Activated T-helper 2 cell treated with anti-CD3 and anti-CD28 coated beads, Interferon-gamma antibody, Interleukin-2, Interleukin-4, amounts not matched to agents 10 μg/mL and 5 μg/mL and 100 μg/mL, durations not matched to agents 14 hours and 24 hours and 36 hours (primary cell): ENCODE measurements at regions of chr13 and their contacts with region 1.

Region 1: GRCh38 chr13:44879463-44880058 is 109.7 kb downstream of the NUFIP1 start:
- DNase-seq: no peak
- H3K4me3 Mint-ChIP-seq: no peak overlapping the region
- H3K27ac Mint-ChIP-seq: no peak overlapping the region
- H3K4me1 Mint-ChIP-seq: peaks cover 2% of the 10 kb centered on the region
- H3K27me3 Mint-ChIP-seq: peaks cover 4% of the 10 kb centered on the region

Region 2: DNA sequence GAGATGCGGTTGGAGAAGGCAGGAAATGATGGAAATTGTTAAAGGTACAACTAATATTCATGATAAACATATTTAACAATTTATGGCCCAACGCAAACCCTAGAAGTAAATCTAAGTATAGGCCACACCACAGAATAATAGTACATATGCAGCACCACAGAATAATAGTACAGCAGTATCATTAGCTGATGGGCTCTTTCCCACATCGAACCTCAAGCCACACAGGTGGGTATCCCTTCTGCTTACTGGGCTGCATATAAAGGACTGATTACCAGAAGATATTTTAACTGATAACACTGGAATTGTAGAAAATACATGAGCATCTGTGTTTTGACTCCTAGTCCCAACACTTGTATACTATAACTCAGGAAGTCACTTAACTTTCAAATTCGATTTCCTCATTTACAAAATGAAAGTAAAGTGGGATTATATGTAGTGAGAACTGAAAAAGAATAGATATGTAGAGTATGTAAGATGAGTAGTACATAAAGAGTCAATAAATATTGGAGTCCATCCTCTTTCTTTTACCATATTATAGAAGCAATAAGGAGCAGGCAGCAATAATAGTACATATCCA is 394.9 kb before region 1 on chr13:
- intact Hi-C with region 1: loop called (anchors 1 kb)
- DNase-seq: no peak
- H3K4me3 Mint-ChIP-seq: no peak overlapping the region
- H3K27ac Mint-ChIP-seq: no peak overlapping the region
- H3K4me1 Mint-ChIP-seq: peaks cover 11% of the 10 kb centered on the region
- H3K27me3 Mint-ChIP-seq: peaks cover 6% of the 10 kb centered on the region

Region 3: GRCh38 chr13:44855860-44856259 is 23.7 kb before region 1 on chr13:
- intact Hi-C with region 1: no loop called
- DNase-seq: no peak
- H3K4me3 Mint-ChIP-seq: no peak overlapping the region
- H3K27ac Mint-ChIP-seq: no peak overlapping the region
- H3K4me1 Mint-ChIP-seq: no peaks in the 10 kb centered on the region
- H3K27me3 Mint-ChIP-seq: peaks cover 15% of the 10 kb centered on the region

Region 4: DNA sequence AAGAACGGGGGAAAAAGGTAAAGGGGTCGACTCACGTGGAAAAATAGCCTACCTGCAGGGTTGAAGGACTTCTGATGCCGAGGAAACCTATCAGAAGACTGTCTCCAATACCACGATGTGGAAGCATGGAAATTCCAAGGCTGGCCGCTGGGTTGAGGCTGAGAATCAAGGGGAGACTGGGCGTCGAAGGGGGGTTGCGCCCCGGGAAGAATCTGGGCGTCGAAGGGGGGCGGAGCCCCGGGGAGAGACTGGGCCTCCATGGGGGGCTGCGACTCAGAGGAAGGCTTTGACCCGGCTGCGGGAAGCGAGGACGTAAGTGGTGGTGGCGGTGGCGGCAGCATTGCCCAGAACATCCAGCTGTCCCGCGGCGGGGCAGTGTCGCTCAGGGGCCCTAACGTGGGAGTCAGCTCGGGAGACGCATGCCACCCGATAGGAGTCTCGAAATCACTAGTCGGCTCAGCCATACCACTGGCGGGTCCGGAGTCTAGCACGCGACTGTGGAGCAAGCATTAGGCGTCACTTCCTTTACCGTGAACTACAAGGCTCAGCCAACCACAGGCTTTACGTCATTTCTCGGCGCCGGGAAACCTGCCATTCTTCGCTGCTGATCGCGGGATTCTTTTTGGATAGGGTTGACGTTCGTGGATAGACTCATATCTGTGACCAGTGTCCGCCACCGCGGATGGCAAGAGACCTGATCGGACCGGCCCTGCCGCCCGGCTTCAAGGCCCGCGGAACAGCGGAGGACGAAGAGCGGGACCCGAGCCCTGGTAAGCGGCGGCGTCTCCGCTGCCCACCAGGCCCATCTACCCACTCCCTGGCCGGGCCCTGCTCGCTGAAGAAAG is 109.6 kb after region 1 on chr13 and contains the starts of genes GPALPP1 and NUFIP1:
- intact Hi-C with region 1: no loop called
- DNase-seq: peak; percentile 88
- H3K4me3 Mint-ChIP-seq: peak within 1 kb of the TSS; percentile 95
- H3K27ac Mint-ChIP-seq: peak within 1 kb of the TSS; percentile 95
- H3K4me1 Mint-ChIP-seq: peaks cover 43% of the 10 kb centered on the region
- H3K27me3 Mint-ChIP-seq: no peaks in the 10 kb centered on the region
- total RNA-seq, gene GPALPP1: 29.1 and 32.9 TPM in 2 replicates
- total RNA-seq, gene NUFIP1: 9.5 and 10.3 TPM in 2 replicates